Activated T-helper 1 cell treated with anti-CD3 and anti-CD28 coated beads, Interleukin-12 subunit alpha, Interleukin-12 subunit beta, Interleukin-2, Interleukin-4 antibody, amounts not matched to agents 30 ng/mL and 10 ng/mL and 1 ng/mL, durations not matched to agents 14 hours and 24 hours and 36 hours (primary cell): ENCODE measurements at regions of chr16 and their contacts with region 1.

Region 1: DNA sequence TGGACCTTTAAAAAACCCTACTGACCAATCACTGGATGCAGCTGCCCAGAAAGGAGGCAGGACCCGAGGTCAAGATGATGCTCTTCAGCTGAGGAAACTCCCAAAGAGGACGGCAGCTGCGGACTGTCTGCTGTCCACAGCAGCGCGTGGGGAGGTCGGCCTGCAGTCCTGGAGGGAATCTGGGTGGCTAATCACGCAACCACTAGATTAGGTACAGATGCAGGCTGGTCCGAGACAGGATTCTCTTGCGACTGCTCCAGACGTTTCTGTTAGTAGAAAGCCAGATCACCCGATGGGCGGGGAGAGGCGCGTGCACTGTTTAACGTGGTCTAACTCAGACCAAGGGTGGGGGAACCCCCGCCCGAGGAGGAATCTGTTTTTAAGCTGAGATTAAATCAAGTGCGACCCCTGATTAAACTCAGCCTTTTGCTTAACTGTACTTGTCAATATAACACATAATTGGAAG is 8.8 kb downstream of the CTRB2 start:
- DNase-seq: no peak
- H3K4me3 Mint-ChIP-seq: no peak overlapping the region
- H3K27ac Mint-ChIP-seq: no peak overlapping the region
- H3K4me1 Mint-ChIP-seq: peaks cover 11% of the 10 kb centered on the region
- H3K27me3 Mint-ChIP-seq: peaks cover 35% of the 10 kb centered on the region

Region 2: GRCh38 chr16:74998481-74999218 is 199.5 kb before region 1 on chr16 and contains the start of gene ZNRF1:
- intact Hi-C with region 1: no loop called
- DNase-seq: peak; percentile 74
- H3K4me3 Mint-ChIP-seq: peak within 1 kb of the TSS; percentile 91
- H3K27ac Mint-ChIP-seq: peak within 1 kb of the TSS; percentile 86
- H3K4me1 Mint-ChIP-seq: peaks cover 43% of the 10 kb centered on the region
- H3K27me3 Mint-ChIP-seq: peaks cover 2% of the 10 kb centered on the region
- total RNA-seq, gene ZNRF1: 51.2 and 52.2 TPM in 2 replicates

Region 3: GRCh38 chr16:75160386-75160785 is 37.8 kb before region 1 on chr16:
- intact Hi-C with region 1: no loop called
- DNase-seq: no peak
- H3K4me3 Mint-ChIP-seq: no peak overlapping the region
- H3K27ac Mint-ChIP-seq: no peak overlapping the region
- H3K4me1 Mint-ChIP-seq: no peaks in the 10 kb centered on the region
- H3K27me3 Mint-ChIP-seq: no peaks in the 10 kb centered on the region

Region 4: GRCh38 chr16:75234856-75235696 is 36.9 kb after region 1 on chr16:
- intact Hi-C with region 1: loop called (anchors 5 kb)
- DNase-seq: no peak
- H3K4me3 Mint-ChIP-seq: no peak overlapping the region
- H3K27ac Mint-ChIP-seq: no peak overlapping the region
- H3K4me1 Mint-ChIP-seq: no peaks in the 10 kb centered on the region
- H3K27me3 Mint-ChIP-seq: peaks cover 13% of the 10 kb centered on the region

Region 5: GRCh38 chr16:75379911-75380847 is 182.0 kb after region 1 on chr16:
- intact Hi-C with region 1: loop called (anchors 1 kb)
- DNase-seq: peak; percentile 21
- H3K4me3 Mint-ChIP-seq: peak overlapping the region; percentile 41
- H3K27ac Mint-ChIP-seq: peak overlapping the region; percentile 36
- H3K4me1 Mint-ChIP-seq: peaks cover 27% of the 10 kb centered on the region
- H3K27me3 Mint-ChIP-seq: peaks cover 40% of the 10 kb centered on the region

Region 6: DNA sequence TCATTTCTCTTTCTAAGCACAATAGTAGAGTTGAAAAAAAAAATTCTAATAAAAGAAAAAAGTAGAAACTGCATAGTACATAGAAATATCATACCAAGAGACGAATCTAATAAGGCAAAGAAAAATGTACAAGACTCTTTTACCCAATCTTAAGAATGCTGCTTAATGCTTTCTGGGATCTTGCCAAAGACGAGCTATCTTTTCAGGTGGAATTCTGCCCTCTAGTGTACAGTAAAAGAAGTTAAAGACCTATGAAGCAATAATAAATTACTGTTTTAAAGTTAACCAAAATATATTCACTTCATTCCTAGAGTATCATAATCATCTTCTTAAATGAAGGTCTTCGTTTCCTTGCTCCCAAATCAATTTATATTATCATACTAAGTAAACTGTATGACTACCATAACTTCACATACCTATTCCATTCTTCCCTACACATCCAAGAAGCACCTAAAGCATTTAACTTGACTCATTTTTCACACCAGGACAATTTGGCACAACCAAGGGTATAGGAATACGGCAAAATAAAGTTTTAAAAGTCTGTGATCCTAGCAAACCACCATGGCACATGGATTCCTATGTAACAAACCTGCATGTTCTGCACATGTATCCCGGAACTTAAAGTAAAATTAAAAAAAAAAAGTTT is 187.5 kb after region 1 on chr16:
- intact Hi-C with region 1: loop called (anchors 1 kb)
- DNase-seq: no peak
- H3K4me3 Mint-ChIP-seq: no peak overlapping the region
- H3K27ac Mint-ChIP-seq: no peak overlapping the region
- H3K4me1 Mint-ChIP-seq: peaks cover 4% of the 10 kb centered on the region
- H3K27me3 Mint-ChIP-seq: peaks cover 14% of the 10 kb centered on the region

Region 7: DNA sequence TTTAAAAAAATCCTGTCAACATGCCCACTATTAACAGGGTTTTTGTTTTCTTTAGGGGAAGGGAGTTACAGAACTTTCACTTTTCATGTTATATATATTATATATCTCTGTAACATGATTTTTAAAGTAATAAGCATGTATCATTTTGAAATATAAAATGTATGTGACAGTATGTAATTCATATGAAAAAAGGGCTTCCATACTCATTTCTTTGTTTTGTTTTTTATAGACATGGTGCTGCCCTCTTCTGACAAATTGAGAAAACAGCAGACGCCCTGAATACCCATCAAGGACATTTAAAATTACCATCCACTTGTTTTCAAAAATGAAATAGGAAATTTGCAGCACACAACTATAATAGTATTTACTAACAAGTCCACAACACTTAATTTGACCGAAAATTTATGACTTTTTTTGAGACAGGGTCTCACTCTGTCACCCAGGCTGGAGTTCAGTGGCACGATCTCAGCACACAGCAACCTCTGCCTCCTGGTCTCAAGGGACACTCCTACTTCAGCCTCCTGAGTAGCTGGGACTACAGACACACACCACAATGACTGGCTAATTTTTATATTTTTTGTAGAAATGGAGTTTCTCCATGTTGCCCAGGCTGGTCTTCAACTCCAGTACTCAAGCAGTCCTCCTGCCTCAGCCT is 204.8 kb after region 1 on chr16:
- intact Hi-C with region 1: loop called (anchors 1 kb)
- DNase-seq: no peak
- H3K4me3 Mint-ChIP-seq: no peak overlapping the region
- H3K27ac Mint-ChIP-seq: peak overlapping the region; percentile 15
- H3K4me1 Mint-ChIP-seq: peaks cover 12% of the 10 kb centered on the region
- H3K27me3 Mint-ChIP-seq: no peaks in the 10 kb centered on the region

Region 8: GRCh38 chr16:75519881-75520280 is 321.7 kb after region 1 on chr16:
- intact Hi-C with region 1: loop called (anchors 1 kb)
- DNase-seq: no peak
- H3K4me3 Mint-ChIP-seq: no peak overlapping the region
- H3K27ac Mint-ChIP-seq: no peak overlapping the region
- H3K4me1 Mint-ChIP-seq: peaks cover 5% of the 10 kb centered on the region
- H3K27me3 Mint-ChIP-seq: peaks cover 5% of the 10 kb centered on the region

Region 9: GRCh38 chr16:75764154-75764768 is 566.1 kb after region 1 on chr16:
- intact Hi-C with region 1: loop called (anchors 1 kb)
- DNase-seq: peak; percentile 35
- H3K4me3 Mint-ChIP-seq: no peak overlapping the region
- H3K27ac Mint-ChIP-seq: no peak overlapping the region
- H3K4me1 Mint-ChIP-seq: no peaks in the 10 kb centered on the region
- H3K27me3 Mint-ChIP-seq: peaks cover 12% of the 10 kb centered on the region